HCT116 (cell line): ENCODE measurements at regions of chr1 and their contacts with region 1.

Region 1: GRCh38 chr1:61842871-61843514 is 100.7 kb downstream of the PATJ start:
- DNase-seq: no peak
- ATAC-seq: peak; percentile 72
- H3K4me3 ChIP-seq: no peak overlapping the region
- H3K27ac ChIP-seq: peak overlapping the region; percentile 4; the same call in 1 of the 2 replicates
- H3K4me1 ChIP-seq: peaks cover 20 to 24% of the 10 kb centered on the region in 2 experiments
- H3K27me3 ChIP-seq: no peaks in the 10 kb centered on the region
- CTCF ChIP-seq: peak; percentile 11 to 38 (median 27); a peak in 3 of 6 replicates
- POLR2A ChIP-seq: no peak
- RAD21 ChIP-seq: peak; percentile 55

Region 2: DNA sequence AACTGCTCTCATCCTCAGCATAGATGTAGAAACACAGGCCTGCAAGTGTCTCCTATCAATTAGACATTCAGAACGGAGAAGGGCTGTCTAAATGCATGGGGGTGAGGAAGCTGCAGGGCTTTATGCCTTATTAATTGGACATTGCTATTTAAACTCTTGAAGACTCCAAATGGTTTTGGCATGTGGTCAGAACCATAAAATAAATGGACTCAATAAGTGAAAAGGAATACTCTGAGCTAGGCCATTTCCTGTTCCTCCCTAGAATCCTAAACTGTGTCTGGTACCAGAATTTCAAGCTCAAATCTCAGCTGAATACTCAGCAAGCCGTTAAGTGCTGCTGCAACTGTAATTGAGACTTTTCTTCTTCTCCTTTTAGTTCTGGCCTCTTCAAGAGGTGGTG is 1689.0 kb before region 1 on chr1:
- CTCF ChIA-PET with region 1: no interaction called
- POLR2A ChIA-PET with region 1: no interaction called
- RAD21 ChIA-PET with region 1: no interaction called
- intact Hi-C with region 1: loop called (anchors 10 kb)
- DNase-seq: no peak
- ATAC-seq: no peak
- H3K4me3 ChIP-seq: no peak overlapping the region
- H3K27ac ChIP-seq: no peak overlapping the region
- H3K4me1 ChIP-seq: no peaks in the 10 kb centered on the region
- H3K27me3 ChIP-seq: peaks cover 21% of the 10 kb centered on the region
- CTCF ChIP-seq: no peak
- POLR2A ChIP-seq: no peak
- RAD21 ChIP-seq: no peak

Region 3: GRCh38 chr1:61692155-61692800 is 150.7 kb before region 1 on chr1:
- CTCF ChIA-PET with region 1: no interaction called
- POLR2A ChIA-PET with region 1: no interaction called
- RAD21 ChIA-PET with region 1: no interaction called
- intact Hi-C with region 1: loop called (anchors 10 kb)
- DNase-seq: no peak
- ATAC-seq: peak; percentile 63
- H3K4me3 ChIP-seq: no peak overlapping the region
- H3K27ac ChIP-seq: peak overlapping the region; percentile 58
- H3K4me1 ChIP-seq: peaks cover 10 to 16% of the 10 kb centered on the region in 2 experiments
- H3K27me3 ChIP-seq: no peaks in the 10 kb centered on the region
- CTCF ChIP-seq: no peak
- POLR2A ChIP-seq: no peak
- RAD21 ChIP-seq: no peak